Heart right ventricle (tissue), 16 donors: ENCODE measurements at regions of chr11 and their contacts with region 1.

Region 1: DNA sequence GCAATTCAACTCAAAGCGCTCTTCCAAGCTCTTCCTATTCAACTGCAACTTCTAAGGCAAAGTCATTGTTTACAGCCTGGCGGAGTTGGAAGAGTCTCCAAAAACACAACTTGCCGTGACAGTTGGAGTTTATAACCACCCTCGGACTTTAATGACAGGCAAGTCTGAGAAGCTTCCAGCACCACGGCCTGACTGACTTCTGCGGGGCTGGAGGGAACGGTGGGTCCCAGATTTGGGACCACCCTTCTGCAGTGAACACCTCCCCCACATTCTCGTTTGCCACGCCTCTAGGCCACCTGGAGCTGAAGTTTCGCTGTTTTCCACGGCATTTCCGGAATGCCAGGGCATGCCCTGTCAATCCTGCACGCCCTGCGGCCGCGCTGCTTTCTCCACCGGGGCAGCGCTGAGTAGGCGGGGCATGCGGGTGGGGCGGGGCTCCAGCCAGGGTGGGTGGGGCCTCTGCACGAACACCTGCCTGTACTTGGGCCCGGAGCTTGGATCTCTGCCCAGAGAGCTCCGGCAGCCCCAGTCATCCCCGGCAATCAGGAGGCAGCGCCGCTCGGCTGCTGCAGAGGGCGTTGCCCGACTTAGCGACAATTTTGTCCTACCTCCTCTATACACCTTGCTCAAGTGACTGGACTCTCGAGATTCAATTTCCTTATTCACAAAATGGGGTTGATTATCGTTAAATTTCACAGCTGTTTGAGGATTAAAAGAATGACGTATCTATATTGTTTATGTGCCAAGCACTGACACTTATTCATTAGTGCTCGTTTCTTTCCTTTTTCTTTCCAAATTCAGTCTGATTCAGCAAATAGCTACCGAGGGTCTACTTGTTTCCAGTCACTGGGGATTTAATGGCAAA is 48.7 kb upstream of the BIRC3 start:
- DNase-seq: peak; percentile 58 to 77
- ATAC-seq: peak; percentile 88 to 97 (median 96)
- H3K4me3 ChIP-seq: peak overlapping the region in 9 of 10 donors; percentile 34 to 52 (median 48)
- H3K27ac ChIP-seq: peak overlapping the region in 3 of 10 donors; percentile 30 to 45 (median 39)
- H3K4me1 ChIP-seq: peaks cover 4 to 21% (median 9%) of the 10 kb centered on the region in 9 donors
- H3K27me3 ChIP-seq: peaks cover 0 to 53% (median 0%) of the 10 kb centered on the region in 7 donors
- CTCF ChIP-seq: peak in 7 of 9 donors; percentile 41 to 70 (median 52)

Region 2: DNA sequence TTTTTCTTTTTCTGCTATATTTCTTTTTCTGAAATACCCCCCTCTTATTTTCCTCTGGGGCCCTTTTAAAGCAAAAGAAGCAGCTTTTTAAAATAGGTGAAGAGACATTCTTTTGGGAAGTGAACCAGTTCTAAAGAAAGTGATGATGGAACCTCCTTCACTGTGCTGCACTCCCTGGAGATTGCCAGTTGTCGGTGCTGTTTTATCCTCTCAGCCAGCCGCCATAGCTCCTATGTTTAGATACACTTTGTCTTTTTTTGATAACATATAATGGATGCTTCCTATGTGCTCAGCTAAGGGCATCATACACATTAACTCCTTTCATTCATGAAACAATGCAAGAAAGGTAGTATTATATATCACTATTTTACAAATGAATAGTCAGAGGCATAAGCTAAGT is 207.3 kb before region 1 on chr11:
- intact Hi-C with region 1: loop called in 1 of 10 experiments (anchors 10 kb)
- DNase-seq: no peak
- ATAC-seq: peak in 2 of 8 donors; percentile 50 to 64
- H3K4me3 ChIP-seq: no peak overlapping the region
- H3K27ac ChIP-seq: no peak overlapping the region
- H3K4me1 ChIP-seq: no peaks in the 10 kb centered on the region
- H3K27me3 ChIP-seq: peaks cover 0 to 2% (median 0%) of the 10 kb centered on the region in 7 donors
- CTCF ChIP-seq: peak in 7 of 9 donors; percentile 29 to 61 (median 41)

Region 3: DNA sequence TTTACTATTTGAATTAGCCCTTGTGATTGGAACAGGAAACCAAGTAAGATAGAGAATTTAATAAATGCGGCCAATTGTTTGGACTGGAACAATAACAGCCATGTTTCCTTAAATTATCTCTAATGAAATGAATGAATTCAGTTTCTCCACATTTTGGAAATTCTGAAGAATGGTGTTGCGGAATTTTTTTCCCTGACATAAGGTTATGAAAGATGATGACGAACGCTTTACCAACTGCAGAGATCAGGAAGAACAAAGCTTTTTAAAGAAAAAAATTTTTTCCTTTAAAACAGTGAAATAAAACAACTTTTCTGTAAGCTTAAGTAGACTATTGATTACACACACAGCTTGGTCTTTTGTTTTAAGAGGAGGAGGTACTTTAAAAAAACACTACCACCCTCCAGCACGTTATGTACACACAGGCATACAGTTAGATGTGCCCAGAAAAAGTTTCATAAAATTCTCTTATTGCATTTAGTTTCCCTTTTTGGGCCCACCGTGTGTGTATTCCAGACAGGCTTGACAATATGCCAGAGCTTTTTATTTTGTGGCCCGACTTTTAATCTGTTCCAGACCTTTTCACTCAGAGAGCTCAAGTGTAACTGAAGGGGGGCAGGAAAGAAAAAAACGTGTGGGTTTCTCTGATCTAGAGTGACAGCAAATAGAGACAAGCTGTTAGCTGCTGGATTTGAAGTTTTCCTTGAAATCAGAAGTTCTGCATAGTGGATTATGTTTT is 81.0 kb before region 1 on chr11:
- intact Hi-C with region 1: loop called in 1 of 10 experiments (anchors 10 kb)
- DNase-seq: no peak
- ATAC-seq: peak in 3 of 8 donors; percentile 30 to 49 (median 46)
- H3K4me3 ChIP-seq: no peak overlapping the region
- H3K27ac ChIP-seq: peak overlapping the region in 3 of 10 donors; percentile 12 to 52 (median 40)
- H3K4me1 ChIP-seq: peaks cover 3 to 36% (median 19%) of the 10 kb centered on the region in 9 donors
- H3K27me3 ChIP-seq: no peaks in the 10 kb centered on the region
- CTCF ChIP-seq: no peak

Region 4: DNA sequence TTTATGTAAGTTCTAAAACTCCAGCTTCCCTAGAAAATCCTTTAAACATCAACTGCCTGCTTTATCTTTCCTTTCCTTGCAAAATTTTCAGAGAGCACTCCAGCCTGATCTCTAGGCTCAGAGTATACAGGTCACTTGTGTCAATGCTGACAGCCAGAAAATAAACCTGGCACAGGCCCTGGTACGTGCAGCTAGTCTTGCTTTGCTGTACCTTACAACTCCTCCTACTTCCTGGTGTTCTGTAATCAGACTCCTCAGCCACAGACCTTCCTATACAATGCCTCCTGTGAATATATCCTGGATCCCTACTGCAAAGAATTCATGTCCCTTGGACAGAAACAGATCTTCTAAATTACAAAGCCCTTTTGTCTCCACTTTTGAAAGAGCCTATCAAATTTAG is 208.3 kb after region 1 on chr11:
- intact Hi-C with region 1: no loop called
- DNase-seq: peak in 1 of 2 donors; percentile 19
- ATAC-seq: peak in 5 of 8 donors; percentile 52 to 94 (median 63)
- H3K4me3 ChIP-seq: no peak overlapping the region
- H3K27ac ChIP-seq: peak overlapping the region in 3 of 10 donors; percentile 17 to 65 (median 45)
- H3K4me1 ChIP-seq: peaks cover 0 to 16% (median 3%) of the 10 kb centered on the region in 9 donors
- H3K27me3 ChIP-seq: no peaks in the 10 kb centered on the region
- CTCF ChIP-seq: no peak